Heart left ventricle (tissue), 16 donors: ENCODE measurements at regions of chr10 and their contacts with region 1.

Region 1: DNA sequence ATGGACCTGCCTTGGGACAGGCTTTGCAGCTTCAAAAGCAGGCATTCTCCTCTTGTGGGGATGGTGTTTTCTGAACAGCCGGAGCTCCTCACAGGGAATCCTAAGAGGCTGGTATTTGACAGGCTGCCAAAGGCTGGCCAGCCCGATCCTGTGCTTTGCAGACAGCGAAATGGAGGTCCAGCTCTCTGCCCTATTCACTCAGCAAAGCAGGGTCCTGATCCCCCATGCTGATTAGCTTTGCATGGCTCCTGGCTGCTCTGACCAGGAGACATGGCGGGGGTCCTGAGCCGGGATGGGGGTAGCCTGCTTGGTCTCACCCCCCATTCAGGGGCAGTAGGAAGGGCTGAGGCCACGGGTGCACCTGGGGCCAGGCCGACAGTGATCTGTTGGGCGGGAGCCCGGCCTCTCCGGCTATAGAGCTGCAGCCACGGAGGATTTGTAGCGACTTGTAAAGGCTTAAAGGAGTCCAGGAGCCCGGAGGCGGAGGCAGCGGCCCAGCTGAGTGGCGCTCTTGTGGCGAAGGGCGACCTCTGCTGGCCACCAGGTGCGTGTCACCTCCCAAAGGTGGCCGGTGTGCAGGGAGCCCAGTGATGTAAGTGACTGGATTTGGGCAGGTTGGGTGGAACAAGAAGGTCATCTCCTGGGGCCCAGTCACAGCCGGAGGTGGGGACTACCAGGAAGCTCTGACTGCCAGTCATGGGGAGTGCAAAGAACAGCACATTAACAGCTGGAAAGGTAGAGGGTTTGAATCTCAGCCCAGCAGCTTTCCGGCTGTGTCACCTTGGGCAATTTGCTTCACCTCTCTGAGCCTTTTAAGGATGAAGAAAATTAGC is 126.5 kb downstream of the ZMIZ1 start:
- DNase-seq: peak; percentile 85 to 93 (median 90)
- ATAC-seq: peak; percentile 72 to 85 (median 77)
- H3K4me3 ChIP-seq: peak overlapping the region in 1 of 12 donors; percentile 1
- H3K27ac ChIP-seq: peak overlapping the region in 11 of 12 donors; percentile 41 to 78 (median 70)
- H3K4me1 ChIP-seq: peaks cover 0 to 65% (median 46%) of the 10 kb centered on the region in 12 donors
- H3K27me3 ChIP-seq: no peaks in the 10 kb centered on the region
- CTCF ChIP-seq: peak; percentile 90 to 99 (median 97)
- POLR2A ChIP-seq: no peak

Region 2: GRCh38 chr10:78302989-78303854 is 892.1 kb before region 1 on chr10:
- intact Hi-C with region 1: loop called in 6 of 10 experiments (anchors 5 to 10 kb)
- DNase-seq: peak; percentile 94 to 97 (median 95)
- ATAC-seq: peak; percentile 96 to 99 (median 98)
- H3K4me3 ChIP-seq: peak overlapping the region; percentile 12 to 68 (median 60)
- H3K27ac ChIP-seq: peak overlapping the region; percentile 83 to 92 (median 87)
- H3K4me1 ChIP-seq: peaks cover 0 to 20% (median 11%) of the 10 kb centered on the region in 12 donors
- H3K27me3 ChIP-seq: no peaks in the 10 kb centered on the region
- CTCF ChIP-seq: peak; percentile 59 to 81 (median 69)
- POLR2A ChIP-seq: peak; percentile 3 to 78

Region 3: DNA sequence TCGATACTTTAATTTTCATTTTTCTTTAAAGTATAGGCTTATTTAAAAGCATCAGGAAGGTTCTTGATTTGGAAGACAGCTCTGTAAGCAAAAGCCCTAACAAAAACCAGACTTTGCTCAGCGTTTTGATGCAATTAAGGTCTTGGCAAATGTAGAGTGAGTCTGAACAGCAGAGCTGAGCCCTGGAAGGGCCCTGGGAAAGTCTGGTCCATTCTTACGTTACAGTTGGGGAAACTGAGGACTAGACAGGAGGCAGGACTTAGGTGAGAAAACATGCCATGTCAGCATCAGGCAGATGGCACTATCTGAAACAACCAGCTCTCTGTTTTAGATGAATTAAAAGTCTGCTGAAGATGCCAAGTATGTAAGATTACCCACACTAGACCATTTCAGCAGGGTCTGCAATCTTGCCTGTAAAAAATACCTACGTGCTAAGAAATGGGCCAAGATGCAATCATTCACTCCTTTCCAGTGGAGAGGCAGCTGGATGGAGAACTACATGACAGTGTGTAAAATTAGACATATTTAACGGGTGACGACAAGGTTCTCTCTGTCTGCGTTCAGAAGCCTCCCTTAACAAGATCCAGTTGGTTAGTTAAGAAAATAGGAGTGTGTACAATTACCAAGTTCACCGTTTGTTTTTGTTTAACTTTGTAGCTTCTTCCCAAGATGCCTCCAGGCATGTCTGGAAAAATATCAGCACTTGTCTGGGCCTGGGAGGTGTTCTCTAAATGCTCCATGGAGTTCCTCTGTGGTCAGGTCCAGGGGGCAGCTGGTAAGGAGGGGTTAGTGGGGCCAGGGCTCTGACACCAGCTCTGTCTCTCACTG is 628.8 kb before region 1 on chr10:
- intact Hi-C with region 1: no loop called
- DNase-seq: no peak
- ATAC-seq: peak in 2 of 4 donors; percentile 23 to 54
- H3K4me3 ChIP-seq: no peak overlapping the region
- H3K27ac ChIP-seq: peak overlapping the region in 3 of 12 donors; percentile 18 to 31 (median 23)
- H3K4me1 ChIP-seq: peaks cover 0 to 17% (median 0%) of the 10 kb centered on the region in 12 donors
- H3K27me3 ChIP-seq: no peaks in the 10 kb centered on the region
- CTCF ChIP-seq: no peak
- POLR2A ChIP-seq: no peak

Region 4: DNA sequence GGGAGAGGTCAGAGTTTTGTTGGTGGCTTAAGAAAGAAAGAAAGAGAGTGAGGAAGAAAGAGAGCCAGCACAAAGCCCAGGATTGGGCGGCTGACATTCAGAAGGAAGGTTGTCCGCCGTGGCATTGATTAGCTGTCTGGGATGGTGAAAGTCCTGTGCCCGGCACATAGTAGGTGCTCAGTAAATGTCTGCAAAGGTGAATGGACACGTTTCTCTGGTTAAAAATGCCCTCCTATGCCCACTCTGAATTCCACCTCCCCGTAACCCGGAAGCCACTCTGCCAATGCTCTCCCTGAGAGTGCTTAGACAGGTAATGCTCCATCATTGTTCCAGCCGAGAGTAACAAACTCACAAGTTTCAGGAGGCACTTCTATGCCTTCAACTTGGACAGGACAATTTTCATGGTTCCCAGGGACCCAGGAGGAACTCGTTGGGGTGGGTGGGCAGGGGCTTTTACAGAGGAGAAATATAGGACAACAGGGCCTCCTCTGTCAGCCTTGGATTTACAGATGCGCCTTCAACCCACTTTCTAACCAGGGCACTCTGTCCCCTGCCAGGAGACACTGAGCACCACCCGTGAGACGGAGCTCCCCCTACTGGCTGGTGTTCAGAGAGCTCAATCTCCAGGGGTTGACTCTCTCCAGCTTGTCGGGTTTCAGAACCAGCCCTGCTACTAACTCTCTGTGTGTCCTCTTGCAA is 538.0 kb before region 1 on chr10:
- intact Hi-C with region 1: loop called in 4 of 10 experiments (anchors 5 to 10 kb)
- DNase-seq: peak; percentile 72 to 84 (median 76)
- ATAC-seq: peak; percentile 81 to 94 (median 92)
- H3K4me3 ChIP-seq: no peak overlapping the region
- H3K27ac ChIP-seq: peak overlapping the region in 1 of 12 donors; percentile 45
- H3K4me1 ChIP-seq: peaks cover 0 to 5% (median 0%) of the 10 kb centered on the region in 12 donors
- H3K27me3 ChIP-seq: no peaks in the 10 kb centered on the region
- CTCF ChIP-seq: peak; percentile 55 to 77 (median 66)
- POLR2A ChIP-seq: no peak

Region 5: DNA sequence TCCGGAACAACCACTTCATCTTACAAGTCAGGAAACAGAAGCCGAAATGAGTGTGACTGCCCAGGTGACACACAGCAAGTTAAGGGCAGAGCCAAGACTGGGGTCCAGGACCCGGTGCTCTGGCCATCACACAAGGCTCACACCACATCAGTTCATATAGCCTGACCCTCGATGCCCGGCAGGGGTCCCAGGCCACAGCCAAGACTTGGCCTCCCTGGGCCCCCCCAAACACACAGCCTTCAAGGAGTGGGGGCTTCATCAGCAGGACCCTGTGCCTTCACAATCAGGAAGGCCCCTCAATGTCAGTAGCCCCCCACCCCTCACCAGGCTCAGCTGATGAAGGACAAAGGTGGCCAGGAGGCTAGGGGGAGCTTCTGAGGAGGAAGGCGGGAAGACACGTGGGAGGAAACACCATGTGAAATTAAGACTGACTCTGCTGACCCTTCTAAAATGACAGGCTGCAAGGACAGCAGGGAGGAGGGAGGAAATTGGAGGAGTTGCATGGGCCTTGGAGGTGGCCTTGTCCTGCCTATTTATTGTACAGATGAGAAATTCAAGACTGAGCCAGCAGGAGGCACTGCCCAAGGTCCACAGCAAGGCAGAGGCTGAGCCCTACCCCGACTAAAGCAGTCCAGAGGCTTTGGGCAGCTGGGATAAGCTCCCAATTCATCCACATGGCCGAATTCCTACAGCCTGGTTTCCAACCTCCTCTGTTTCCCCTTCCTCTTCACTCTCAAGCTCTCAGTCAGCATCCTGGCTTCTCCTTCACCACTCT is 342.7 kb before region 1 on chr10:
- intact Hi-C with region 1: loop called in 9 of 10 experiments (anchors 2 to 10 kb)
- DNase-seq: no peak
- ATAC-seq: peak in 1 of 4 donors; percentile 29
- H3K4me3 ChIP-seq: no peak overlapping the region
- H3K27ac ChIP-seq: no peak overlapping the region
- H3K4me1 ChIP-seq: peaks cover 0 to 17% (median 9%) of the 10 kb centered on the region in 12 donors
- H3K27me3 ChIP-seq: no peaks in the 10 kb centered on the region
- CTCF ChIP-seq: peak in 9 of 12 donors; percentile 15 to 45 (median 30)
- POLR2A ChIP-seq: no peak

Region 6: GRCh38 chr10:79059859-79060379 is 135.4 kb before region 1 on chr10:
- intact Hi-C with region 1: loop called in 1 of 10 experiments (anchors 5 kb)
- DNase-seq: peak in 2 of 5 donors; percentile 17 to 24
- ATAC-seq: no peak
- H3K4me3 ChIP-seq: no peak overlapping the region
- H3K27ac ChIP-seq: no peak overlapping the region
- H3K4me1 ChIP-seq: peaks cover 0 to 10% (median 4%) of the 10 kb centered on the region in 12 donors
- H3K27me3 ChIP-seq: no peaks in the 10 kb centered on the region
- CTCF ChIP-seq: no peak
- POLR2A ChIP-seq: no peak